CD14-positive monocyte (primary cell): ENCODE measurements at regions of chr11 and their contacts with region 1.

Region 1: GRCh38 chr11:10293423-10294289 is at the start of gene SBF2:
- DNase-seq: peak; percentile 80 to 92 (median 89)
- H3K4me3 ChIP-seq: peak within 1 kb of the TSS; percentile 73 to 93 (median 91)
- H3K4me3 Mint-ChIP-seq: peak within 1 kb of the TSS; percentile 90
- H3K27ac ChIP-seq: peak within 1 kb of the TSS; percentile 71 to 87
- H3K27ac Mint-ChIP-seq: peak within 1 kb of the TSS; percentile 93 to 97 (median 94)
- H3K4me1 ChIP-seq: peaks cover 66 to 68% of the 10 kb centered on the region in 2 donors
- H3K4me1 Mint-ChIP-seq: peaks cover 61% of the 10 kb centered on the region
- H3K27me3 ChIP-seq: no peaks in the 10 kb centered on the region
- H3K27me3 Mint-ChIP-seq: no peaks in the 10 kb centered on the region
- CTCF ChIP-seq: no peak
- polyA plus RNA-seq, gene SBF2: 8.9 to 30.7 (median 16.4) TPM

Region 2: DNA sequence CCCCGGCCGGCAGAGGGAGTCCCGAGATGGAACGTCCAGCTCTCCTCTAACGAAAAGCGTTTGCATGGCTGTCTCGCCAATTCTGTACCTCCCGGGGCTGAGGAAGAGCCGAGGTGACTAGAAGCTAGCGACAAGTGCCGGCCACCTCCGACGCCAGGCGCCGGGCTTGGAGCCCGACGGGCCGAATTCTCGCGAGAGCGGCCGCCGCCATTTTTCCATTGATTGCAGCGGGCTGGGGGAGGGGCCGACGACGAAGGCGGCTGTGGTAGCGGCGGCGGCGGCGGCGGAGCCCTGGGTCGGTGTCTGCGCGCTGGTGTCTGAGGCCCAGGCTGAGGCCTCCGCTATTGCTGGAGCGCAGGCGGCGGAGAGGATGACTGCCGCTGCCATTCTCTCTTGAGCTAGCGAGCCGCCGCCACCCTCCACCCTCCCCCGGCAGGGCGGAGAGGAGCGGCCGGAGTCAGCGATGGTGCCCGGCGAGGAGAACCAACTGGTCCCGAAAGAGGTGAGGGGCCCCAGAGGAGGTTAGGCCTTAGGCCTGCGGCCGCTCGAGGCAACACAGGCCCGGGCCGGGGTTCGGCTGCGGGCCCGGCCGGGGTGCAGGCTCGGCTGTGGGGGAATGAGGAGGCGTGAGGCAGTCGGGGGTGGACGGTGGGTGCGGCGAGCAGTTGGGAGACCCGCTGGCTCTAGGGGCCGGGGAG is 1548.2 kb after region 1 on chr11 and contains the start of gene USP47:
- intact Hi-C with region 1: loop called in 1 of 2 experiments (anchors 10 kb)
- DNase-seq: peak; percentile 80 to 85 (median 84)
- H3K4me3 ChIP-seq: peak within 1 kb of the TSS; percentile 80 to 97 (median 94)
- H3K4me3 Mint-ChIP-seq: no peak within 1 kb of the TSS
- H3K27ac ChIP-seq: peak within 1 kb of the TSS; percentile 96 to 97
- H3K27ac Mint-ChIP-seq: no peak within 1 kb of the TSS
- H3K4me1 ChIP-seq: peaks cover 20 to 30% of the 10 kb centered on the region in 2 donors
- H3K4me1 Mint-ChIP-seq: peaks cover 21% of the 10 kb centered on the region
- H3K27me3 ChIP-seq: peaks cover 0 to 2% of the 10 kb centered on the region in 2 donors
- H3K27me3 Mint-ChIP-seq: no peaks in the 10 kb centered on the region
- CTCF ChIP-seq: peak; percentile 6
- polyA plus RNA-seq, gene USP47: 8.1 to 17.5 (median 10.5) TPM